Mammary epithelial cell (primary cell): ENCODE measurements at regions of chr2 and their contacts with region 1.

Region 1: GRCh38 chr2:88055371-88056128 is at the start of gene KRCC1:
- DNase-seq: peak; percentile 95
- H3K4me3 ChIP-seq: peak within 1 kb of the TSS; percentile 79 to 91 (median 79)
- H3K27ac ChIP-seq: peak within 1 kb of the TSS; percentile 88
- H3K4me1 ChIP-seq: peaks cover 19% of the 10 kb centered on the region
- H3K27me3 ChIP-seq: no peaks in the 10 kb centered on the region
- CTCF ChIP-seq: no peak
- total RNA-seq, gene KRCC1: 12.7 to 24.5 TPM

Region 2: GRCh38 chr2:86783615-86784339 is 1271.8 kb before region 1 on chr2:
- CTCF ChIA-PET with region 1: no interaction called
- dilution Hi-C with region 1: no loop called
- in situ Hi-C with region 1: no loop called
- intact Hi-C with region 1: no loop called
- DNase-seq: no peak
- H3K4me3 ChIP-seq: no peak overlapping the region
- H3K27ac ChIP-seq: no peak overlapping the region
- H3K4me1 ChIP-seq: peaks cover under 1% of the 10 kb centered on the region
- H3K27me3 ChIP-seq: peaks cover 6% of the 10 kb centered on the region
- CTCF ChIP-seq: no peak

Region 3: DNA sequence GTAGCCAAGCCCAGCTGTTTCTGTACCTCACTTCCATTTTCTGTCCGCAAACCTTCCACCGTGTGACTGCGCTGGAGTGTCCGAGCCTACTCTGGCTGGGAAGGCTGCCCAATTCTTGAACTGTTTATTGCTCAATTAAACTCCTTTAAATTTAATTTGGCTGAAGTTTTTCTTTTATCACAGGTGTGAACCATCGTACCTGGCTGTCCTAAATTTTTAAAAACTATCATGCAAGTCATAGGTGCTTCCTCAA is 33.0 kb before region 1 on chr2:
- CTCF ChIA-PET with region 1: no interaction called
- dilution Hi-C with region 1: no loop called
- in situ Hi-C with region 1: no loop called
- intact Hi-C with region 1: no loop called
- DNase-seq: no peak
- H3K4me3 ChIP-seq: no peak overlapping the region
- H3K27ac ChIP-seq: no peak overlapping the region
- H3K4me1 ChIP-seq: peaks cover under 1% of the 10 kb centered on the region
- H3K27me3 ChIP-seq: no peaks in the 10 kb centered on the region
- CTCF ChIP-seq: no peak

Region 4: GRCh38 chr2:88038263-88039105 is 17.1 kb before region 1 on chr2:
- CTCF ChIA-PET with region 1: no interaction called
- dilution Hi-C with region 1: no loop called
- in situ Hi-C with region 1: no loop called
- intact Hi-C with region 1: loop called (anchors 1 kb)
- DNase-seq: peak; percentile 87
- H3K4me3 ChIP-seq: no peak overlapping the region
- H3K27ac ChIP-seq: peak overlapping the region; percentile 46
- H3K4me1 ChIP-seq: peaks cover 21% of the 10 kb centered on the region
- H3K27me3 ChIP-seq: no peaks in the 10 kb centered on the region
- CTCF ChIP-seq: no peak